ENCODE measurements at regions of chr1 and their contacts with region 1.

Region 1: DNA sequence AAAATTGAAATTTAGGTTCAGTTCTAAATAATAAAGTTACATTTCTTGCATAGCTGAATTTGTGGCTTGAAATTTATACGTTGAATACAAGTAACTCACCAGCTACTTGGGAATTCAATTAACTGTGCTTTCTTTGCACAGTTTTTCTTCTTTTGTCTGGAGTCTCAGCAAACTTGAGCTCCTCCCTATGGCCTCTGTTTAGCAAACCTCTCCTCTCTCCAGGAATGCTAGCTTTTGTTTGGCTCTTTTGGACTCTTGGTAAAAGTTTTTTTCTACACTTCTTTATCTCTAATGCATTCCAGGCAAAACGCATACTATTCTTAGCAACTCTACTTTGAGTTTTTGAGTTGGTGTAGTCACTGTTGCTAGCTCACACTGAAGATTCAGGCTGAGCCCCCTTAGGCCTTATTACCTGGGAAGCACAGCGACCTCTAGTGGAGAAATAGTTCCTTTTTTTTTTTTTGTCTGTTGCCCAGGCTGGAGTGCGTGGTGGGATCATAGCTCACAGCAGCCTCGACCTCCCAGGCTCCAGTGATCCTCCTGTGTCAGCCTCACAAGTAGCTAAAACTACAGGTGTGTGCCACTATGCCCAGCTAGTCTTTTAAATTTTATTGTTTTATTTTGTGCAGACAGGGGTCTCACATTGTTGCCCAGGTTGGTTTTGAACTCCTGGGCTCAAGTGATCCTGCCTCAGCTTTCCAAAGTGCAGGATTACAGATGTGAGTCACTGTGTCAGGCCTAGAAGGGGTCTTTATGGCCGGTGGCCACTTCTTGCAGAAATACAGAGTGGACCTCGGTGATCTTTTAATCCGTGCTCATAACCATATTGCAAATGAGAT is 61.7 kb downstream of the CASQ2 start:
- DNase-seq: no peak
- ATAC-seq: peak; percentile 88
- H3K4me3 Mint-ChIP-seq: no peak overlapping the region
- H3K27ac Mint-ChIP-seq: no peak overlapping the region
- H3K4me1 Mint-ChIP-seq: no peaks in the 10 kb centered on the region; the same call in 1 of the 2 replicates
- H3K27me3 Mint-ChIP-seq: no peaks in the 10 kb centered on the region
- CTCF ChIP-seq: peak; percentile 75

Region 2: GRCh38 chr1:115595279-115596079 is 111.3 kb before region 1 on chr1:
- CTCF ChIA-PET with region 1: interaction called, 16 read pairs
- POLR2A ChIA-PET with region 1: no interaction called
- DNase-seq: peak; percentile 91
- ATAC-seq: peak; percentile 97
- H3K4me3 Mint-ChIP-seq: no peak overlapping the region
- H3K27ac Mint-ChIP-seq: no peak overlapping the region
- H3K4me1 Mint-ChIP-seq: peaks cover 3% of the 10 kb centered on the region
- H3K27me3 Mint-ChIP-seq: peaks cover 2% of the 10 kb centered on the region
- CTCF ChIP-seq: peak; percentile 88

Region 3: DNA sequence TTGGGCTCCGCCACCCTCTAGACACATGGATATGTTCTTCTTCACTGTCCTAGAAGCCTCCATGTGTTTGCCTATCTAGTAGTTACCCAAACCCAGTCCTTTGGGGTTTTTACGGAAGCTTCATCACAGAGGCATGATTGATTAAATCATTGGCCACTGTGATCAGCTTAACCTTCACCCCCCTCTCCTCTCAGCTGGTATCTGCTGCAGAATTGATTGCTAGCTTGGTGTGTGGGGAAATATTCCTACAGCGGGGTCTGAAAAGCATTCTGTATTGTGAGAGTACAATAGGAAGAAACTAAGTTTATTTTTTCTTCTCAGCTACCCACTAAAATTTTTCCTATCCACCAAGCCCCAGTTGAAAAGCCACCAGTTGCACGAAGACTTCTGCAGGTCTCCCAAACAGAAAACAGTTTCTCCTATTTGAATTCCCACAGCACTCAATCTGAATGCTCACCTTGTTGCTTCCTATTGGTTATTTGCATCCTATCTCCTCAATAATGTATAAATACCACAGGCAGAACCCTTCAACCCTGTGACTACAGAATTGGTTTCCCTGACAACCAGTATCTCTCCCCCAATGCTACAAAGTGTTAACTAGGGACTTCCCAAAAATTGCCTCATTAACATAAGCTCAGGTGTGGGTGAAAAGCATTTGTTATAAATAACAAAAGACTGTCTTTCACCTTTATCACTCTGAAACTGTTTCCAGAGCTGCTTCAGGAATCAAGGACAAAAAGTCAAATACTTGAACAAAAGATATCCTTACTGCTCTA is 74.4 kb before region 1 on chr1:
- CTCF ChIA-PET with region 1: interaction called, 12 read pairs
- POLR2A ChIA-PET with region 1: no interaction called
- DNase-seq: no peak
- ATAC-seq: peak; percentile 78
- H3K4me3 Mint-ChIP-seq: no peak overlapping the region
- H3K27ac Mint-ChIP-seq: peak overlapping the region; percentile 91
- H3K4me1 Mint-ChIP-seq: peaks cover 32% of the 10 kb centered on the region
- H3K27me3 Mint-ChIP-seq: peaks cover 8% of the 10 kb centered on the region
- CTCF ChIP-seq: no peak

Region 4: GRCh38 chr1:115654663-115655305 is 52.0 kb before region 1 on chr1:
- CTCF ChIA-PET with region 1: interaction called, 19 read pairs
- POLR2A ChIA-PET with region 1: no interaction called
- DNase-seq: no peak
- ATAC-seq: peak; percentile 59
- H3K4me3 Mint-ChIP-seq: no peak overlapping the region; the same call in 1 of the 2 replicates
- H3K27ac Mint-ChIP-seq: peak overlapping the region; percentile 43
- H3K4me1 Mint-ChIP-seq: peaks cover 47% of the 10 kb centered on the region
- H3K27me3 Mint-ChIP-seq: no peaks in the 10 kb centered on the region; the same call in 1 of the 2 replicates
- CTCF ChIP-seq: no peak

Region 5: GRCh38 chr1:115694805-115695204 is 12.0 kb before region 1 on chr1:
- CTCF ChIA-PET with region 1: interaction called, 28 read pairs
- POLR2A ChIA-PET with region 1: no interaction called
- DNase-seq: no peak
- ATAC-seq: no peak
- H3K4me3 Mint-ChIP-seq: no peak overlapping the region
- H3K27ac Mint-ChIP-seq: no peak overlapping the region
- H3K4me1 Mint-ChIP-seq: peaks cover 9% of the 10 kb centered on the region
- H3K27me3 Mint-ChIP-seq: no peaks in the 10 kb centered on the region
- CTCF ChIP-seq: no peak

Region 6: GRCh38 chr1:115764541-115764940 is 57.7 kb after region 1 on chr1:
- CTCF ChIA-PET with region 1: interaction called, 88 read pairs
- POLR2A ChIA-PET with region 1: no interaction called
- DNase-seq: no peak
- ATAC-seq: peak; percentile 57; the same call in 1 of the 2 replicates
- H3K4me3 Mint-ChIP-seq: no peak overlapping the region
- H3K27ac Mint-ChIP-seq: no peak overlapping the region
- H3K4me1 Mint-ChIP-seq: peaks cover 13% of the 10 kb centered on the region
- H3K27me3 Mint-ChIP-seq: no peaks in the 10 kb centered on the region
- CTCF ChIP-seq: no peak